ENCODE measurements at regions of chr12 and their contacts with region 1.

Region 1: DNA sequence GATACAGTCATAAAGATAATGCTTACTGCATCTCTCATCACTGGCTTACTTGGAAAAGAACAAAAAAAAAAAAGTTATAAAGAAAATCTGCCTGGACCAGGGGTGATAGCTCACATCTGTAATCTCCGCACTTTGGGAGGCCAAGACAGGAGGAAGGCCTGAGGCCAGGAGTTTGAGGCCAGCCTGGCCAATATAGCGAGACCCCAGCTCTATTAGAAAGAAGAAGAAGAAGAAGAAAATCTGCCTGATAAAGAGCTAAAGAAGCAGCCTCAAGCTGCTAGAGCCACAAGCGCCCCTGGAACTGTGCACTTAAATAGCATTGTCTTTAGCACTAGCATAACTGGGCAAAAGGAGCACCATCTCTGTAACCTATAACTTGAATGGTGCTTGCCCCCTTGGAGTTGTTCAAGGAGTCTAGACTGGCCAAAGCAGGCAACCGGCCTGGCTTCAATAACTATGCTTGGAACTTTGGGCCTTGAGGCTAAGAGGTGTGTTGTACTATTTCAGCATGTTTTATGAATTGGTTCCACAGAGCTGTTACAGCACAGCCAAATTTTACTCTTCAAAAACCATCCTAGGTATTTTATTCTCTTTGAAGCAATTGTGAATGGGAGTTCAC is 53.2 kb downstream of the SINHCAF start:
- DNase-seq: no peak
- H3K4me3 ChIP-seq: no peak overlapping the region
- H3K27ac ChIP-seq: no peak overlapping the region
- H3K27me3 ChIP-seq: no peaks in the 10 kb centered on the region
- CTCF ChIP-seq: no peak

Region 2: DNA sequence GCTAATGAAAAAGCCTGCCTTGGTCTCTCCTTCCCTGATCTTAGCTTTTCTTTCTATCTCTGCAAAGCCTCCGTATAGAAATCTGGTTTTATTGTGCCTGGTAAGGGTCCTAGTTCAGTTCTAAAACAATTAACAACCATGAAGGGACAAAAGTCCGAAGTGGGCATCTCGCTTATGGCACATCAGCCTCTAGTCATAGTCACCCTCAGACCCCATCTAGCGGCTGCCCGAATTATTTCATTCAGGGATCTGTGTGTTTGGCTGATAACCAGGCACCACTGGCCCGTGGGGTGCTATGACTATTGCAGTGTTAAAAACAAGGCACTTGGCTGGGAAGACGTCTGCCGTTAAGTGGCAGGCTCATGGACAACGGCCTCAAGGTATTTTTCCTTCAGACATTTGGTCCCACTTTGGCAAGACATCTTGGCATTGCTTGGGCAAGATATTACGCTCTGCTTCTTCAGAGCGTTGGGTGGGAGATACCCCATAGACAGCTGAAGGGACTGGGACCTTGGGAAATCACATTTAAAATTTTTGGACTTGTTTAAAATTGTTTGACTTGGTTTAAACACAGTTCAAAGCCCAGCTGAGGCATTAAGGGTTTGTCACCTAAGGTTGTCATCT is 33.8 kb before region 1 on chr12:
- CTCF ChIA-PET with region 1: interaction called, 20 read pairs
- POLR2A ChIA-PET with region 1: no interaction called
- DNase-seq: no peak
- H3K4me3 ChIP-seq: no peak overlapping the region; the same call in 1 of the 2 replicates
- H3K27ac ChIP-seq: no peak overlapping the region
- H3K27me3 ChIP-seq: peaks cover 33% of the 10 kb centered on the region
- CTCF ChIP-seq: peak; percentile 80

Region 3: DNA sequence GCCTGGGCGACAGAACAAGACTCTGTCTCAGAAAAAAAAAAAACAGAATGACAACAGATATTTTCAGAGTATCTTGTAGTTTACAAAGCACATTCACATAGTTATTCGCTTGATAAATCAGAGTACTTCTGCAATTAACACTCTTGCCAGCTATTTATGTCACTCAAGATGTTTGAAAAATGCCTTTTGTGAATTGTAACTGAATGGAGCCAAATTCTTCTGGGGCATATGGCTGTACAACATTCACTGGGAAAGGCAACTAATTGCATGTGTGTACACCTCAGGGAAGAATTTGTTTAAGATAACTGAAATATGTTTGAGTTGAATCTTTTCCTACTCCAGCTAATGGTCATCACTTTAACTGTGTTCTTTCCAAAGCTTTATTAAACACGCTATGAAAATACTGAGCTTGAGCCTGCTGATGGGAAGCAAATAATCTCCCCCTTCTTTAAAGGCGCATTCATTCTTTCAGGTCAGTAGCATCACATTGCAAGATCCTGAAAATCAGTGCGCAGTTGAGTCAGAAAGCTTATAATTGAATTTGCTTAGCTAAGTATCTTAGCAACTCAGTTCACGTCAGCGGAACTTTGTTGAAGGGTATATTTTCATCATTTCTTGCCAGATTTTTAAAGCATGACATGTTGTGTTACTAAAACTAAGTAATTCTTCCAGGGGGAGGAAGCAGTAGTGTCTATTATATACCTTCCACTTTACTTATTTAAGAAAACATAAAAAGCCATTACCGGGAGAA is 13.4 kb before region 1 on chr12:
- CTCF ChIA-PET with region 1: interaction called, 167 read pairs
- POLR2A ChIA-PET with region 1: no interaction called
- DNase-seq: no peak
- H3K4me3 ChIP-seq: no peak overlapping the region
- H3K27ac ChIP-seq: no peak overlapping the region
- H3K27me3 ChIP-seq: no peaks in the 10 kb centered on the region
- CTCF ChIP-seq: no peak

Region 4: GRCh38 chr12:31297572-31298512 is 25.1 kb after region 1 on chr12:
- CTCF ChIA-PET with region 1: interaction called, 60 read pairs
- POLR2A ChIA-PET with region 1: no interaction called
- DNase-seq: no peak
- H3K4me3 ChIP-seq: no peak overlapping the region
- H3K27ac ChIP-seq: no peak overlapping the region
- H3K27me3 ChIP-seq: no peaks in the 10 kb centered on the region
- CTCF ChIP-seq: no peak

Measured in AG04450 (cell line).